ENCODE measurements at regions of chr9 and their contacts with region 1.

Region 1: GRCh38 chr9:2849941-2850340 is 6.0 kb upstream of the PUM3 start:
- DNase-seq: no peak
- H3K4me3 ChIP-seq: no peak overlapping the region
- H3K27ac ChIP-seq: no peak overlapping the region
- H3K4me1 ChIP-seq: peaks cover 0 to 8% (median 7%) of the 10 kb centered on the region in 4 donors
- H3K27me3 ChIP-seq: no peaks in the 10 kb centered on the region
- CTCF ChIP-seq: no peak

Region 2: GRCh38 chr9:2014696-2015580 is 835.0 kb before region 1 on chr9 and contains the start of gene SMARCA2:
- intact Hi-C with region 1: loop called (anchors 10 kb)
- DNase-seq: peak; percentile 98 to 99
- H3K4me3 ChIP-seq: peak within 1 kb of the TSS; percentile 67 to 76
- H3K27ac ChIP-seq: peak within 1 kb of the TSS; percentile 96 to 97
- H3K4me1 ChIP-seq: peaks cover 0 to 31% (median 22%) of the 10 kb centered on the region in 4 donors
- H3K27me3 ChIP-seq: no peaks in the 10 kb centered on the region
- CTCF ChIP-seq: no peak

Region 3: DNA sequence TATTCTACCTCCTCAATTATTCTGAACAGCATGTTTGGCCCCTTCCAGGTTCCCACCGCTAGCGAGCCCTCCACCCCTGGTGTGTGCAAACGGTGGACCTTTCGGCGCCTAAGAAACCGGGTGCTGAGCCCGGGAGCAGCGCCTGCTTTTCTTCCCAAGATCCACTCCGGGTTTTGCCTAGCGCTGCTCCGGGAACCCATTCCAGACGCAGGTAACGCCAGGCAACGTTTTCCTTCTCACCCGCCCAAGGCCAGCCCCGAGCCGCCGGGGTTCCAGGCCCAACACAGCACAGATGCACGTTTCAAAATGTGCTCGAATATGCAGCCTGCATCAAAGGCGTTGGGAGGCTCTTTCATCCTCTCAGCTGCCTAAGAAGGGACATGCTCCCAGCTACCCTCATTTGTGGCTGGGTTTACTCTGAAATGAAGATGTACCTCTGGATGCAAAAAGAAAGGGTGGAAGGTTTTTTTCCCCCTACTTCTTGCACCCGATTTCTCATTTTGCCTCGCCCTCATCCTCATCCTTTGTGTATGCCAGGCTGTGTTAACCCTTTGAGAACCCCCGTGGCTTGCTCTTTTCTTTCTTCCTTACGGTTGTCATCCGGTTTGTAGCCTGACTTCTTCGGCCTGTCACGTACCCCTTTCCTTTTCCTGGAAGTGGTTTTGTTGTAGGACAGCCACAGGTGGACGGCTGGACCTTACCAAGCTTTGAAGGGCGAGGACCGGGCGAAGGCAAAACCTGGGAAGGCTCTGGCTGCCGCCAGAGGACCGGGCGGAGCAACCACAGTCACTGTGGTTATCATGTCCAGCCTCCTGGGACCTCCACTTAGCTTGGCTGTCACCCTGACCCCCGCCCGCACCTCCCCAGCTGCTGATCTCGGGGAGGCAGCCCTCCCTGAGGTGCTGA is 607.9 kb before region 1 on chr9:
- intact Hi-C with region 1: loop called (anchors 5 kb)
- DNase-seq: peak; percentile 72 to 84
- H3K4me3 ChIP-seq: peak overlapping the region; percentile 50 to 58
- H3K27ac ChIP-seq: peak overlapping the region; percentile 42
- H3K4me1 ChIP-seq: peaks cover 0 to 20% (median 13%) of the 10 kb centered on the region in 4 donors
- H3K27me3 ChIP-seq: no peaks in the 10 kb centered on the region
- CTCF ChIP-seq: no peak

Region 4: GRCh38 chr9:2788919-2789318 is 61.0 kb before region 1 on chr9:
- intact Hi-C with region 1: no loop called
- DNase-seq: no peak
- H3K4me3 ChIP-seq: no peak overlapping the region
- H3K27ac ChIP-seq: no peak overlapping the region
- H3K4me1 ChIP-seq: no peaks in the 10 kb centered on the region
- H3K27me3 ChIP-seq: no peaks in the 10 kb centered on the region
- CTCF ChIP-seq: no peak

Region 5: GRCh38 chr9:3525836-3526164 is 675.9 kb after region 1 on chr9 and contains the start of gene RFX3:
- intact Hi-C with region 1: loop called (anchors 10 kb)
- DNase-seq: peak; percentile 86 to 95
- H3K4me3 ChIP-seq: peak within 1 kb of the TSS; percentile 77 to 80
- H3K27ac ChIP-seq: peak within 1 kb of the TSS; percentile 99 to 100
- H3K4me1 ChIP-seq: peaks cover 0 to 20% (median 6%) of the 10 kb centered on the region in 4 donors
- H3K27me3 ChIP-seq: no peaks in the 10 kb centered on the region
- CTCF ChIP-seq: no peak